Activated CD8-positive, alpha-beta memory T cell treated with anti-CD3 and anti-CD28 coated beads, Interleukin-2, amount 10 ng/mL, durations not matched to agents 7 days and 5 days (primary cell): ENCODE measurements at regions of chr16 and their contacts with region 1.

Region 1: DNA sequence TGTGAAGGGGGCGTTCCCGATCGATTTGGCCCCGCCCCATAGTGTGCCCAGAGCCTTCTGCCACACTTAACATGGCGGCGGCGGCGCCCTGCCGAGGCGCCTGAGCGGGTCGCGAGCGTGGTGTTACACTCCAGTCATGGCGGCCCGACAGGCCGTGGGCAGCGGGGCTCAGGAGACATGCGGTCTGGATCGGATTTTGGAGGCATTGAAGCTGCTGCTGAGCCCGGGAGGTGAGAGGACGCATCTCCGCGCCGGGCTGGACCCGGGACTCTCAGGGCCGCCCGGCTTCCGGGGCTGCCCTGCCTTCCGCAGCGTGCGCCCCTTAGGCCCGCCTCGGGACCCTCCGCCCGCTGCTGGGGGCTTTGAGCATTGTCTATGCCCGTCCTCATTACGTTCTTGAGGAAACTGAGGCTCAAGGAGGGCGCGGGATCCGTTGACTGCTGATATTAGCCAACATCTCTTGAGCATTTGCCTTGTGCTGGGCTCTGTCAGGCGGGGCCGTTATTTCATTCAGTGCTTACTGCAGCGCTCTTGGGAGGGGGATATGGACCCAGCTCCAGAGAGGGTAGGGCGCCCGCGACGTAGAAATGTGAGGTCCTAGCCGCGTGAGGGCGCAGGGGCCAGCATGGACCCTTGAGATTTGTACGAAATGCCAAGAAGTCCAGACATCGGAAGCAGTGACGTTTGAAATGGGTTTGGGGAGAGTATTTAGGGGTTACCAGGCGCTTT is at the start of gene TANGO6:
- DNase-seq: peak; percentile 93
- ATAC-seq: peak; percentile 94
- H3K4me3 Mint-ChIP-seq: peak within 1 kb of the TSS; percentile 89
- H3K27ac Mint-ChIP-seq: peak within 1 kb of the TSS; percentile 89
- H3K4me1 Mint-ChIP-seq: peaks cover 32% of the 10 kb centered on the region
- H3K27me3 Mint-ChIP-seq: no peaks in the 10 kb centered on the region
- total RNA-seq, gene TANGO6: 20.2 to 22.3 TPM

Region 2: GRCh38 chr16:68528686-68529379 is 314.8 kb before region 1 on chr16:
- CTCF ChIA-PET with region 1: interaction called, 10 read pairs
- DNase-seq: peak; percentile 91
- ATAC-seq: peak; percentile 82
- H3K4me3 Mint-ChIP-seq: peak overlapping the region; percentile 77
- H3K27ac Mint-ChIP-seq: no peak overlapping the region
- H3K4me1 Mint-ChIP-seq: peaks cover 22% of the 10 kb centered on the region
- H3K27me3 Mint-ChIP-seq: no peaks in the 10 kb centered on the region

Region 3: GRCh38 chr16:68590201-68590994 is 253.2 kb before region 1 on chr16:
- CTCF ChIA-PET with region 1: interaction called, 12 read pairs
- DNase-seq: peak; percentile 67
- ATAC-seq: peak; percentile 74
- H3K4me3 Mint-ChIP-seq: no peak overlapping the region
- H3K27ac Mint-ChIP-seq: no peak overlapping the region
- H3K4me1 Mint-ChIP-seq: peaks cover 2% of the 10 kb centered on the region
- H3K27me3 Mint-ChIP-seq: peaks cover 2% of the 10 kb centered on the region

Region 4: DNA sequence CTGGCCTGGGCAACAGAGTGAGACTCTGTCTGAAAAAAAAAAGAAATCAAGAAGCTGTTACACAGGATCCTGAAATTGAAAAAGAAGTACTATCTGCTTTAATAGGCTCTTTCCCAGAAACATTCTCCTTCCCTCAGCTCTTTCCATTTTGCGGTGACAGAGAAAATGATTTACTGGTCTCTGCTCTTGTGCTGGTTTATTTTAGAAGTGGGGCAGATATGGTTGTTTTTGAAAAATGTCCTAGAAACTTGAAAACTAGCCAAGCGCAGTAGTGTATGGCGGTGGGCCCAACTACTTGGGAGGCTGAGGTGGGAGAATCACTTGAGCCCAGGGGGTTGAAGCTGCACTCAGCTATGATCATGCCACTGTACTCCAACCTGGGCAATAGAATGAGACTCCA is 29.1 kb before region 1 on chr16:
- CTCF ChIA-PET with region 1: no interaction called
- DNase-seq: no peak
- ATAC-seq: no peak
- H3K4me3 Mint-ChIP-seq: no peak overlapping the region
- H3K27ac Mint-ChIP-seq: no peak overlapping the region
- H3K4me1 Mint-ChIP-seq: no peaks in the 10 kb centered on the region
- H3K27me3 Mint-ChIP-seq: no peaks in the 10 kb centered on the region

Region 5: GRCh38 chr16:68921654-68922053 is 78.0 kb after region 1 on chr16:
- CTCF ChIA-PET with region 1: no interaction called
- DNase-seq: no peak
- ATAC-seq: no peak
- H3K4me3 Mint-ChIP-seq: no peak overlapping the region
- H3K27ac Mint-ChIP-seq: no peak overlapping the region
- H3K4me1 Mint-ChIP-seq: no peaks in the 10 kb centered on the region
- H3K27me3 Mint-ChIP-seq: no peaks in the 10 kb centered on the region

Region 6: GRCh38 chr16:69105489-69106361 is 262.1 kb after region 1 on chr16 and contains the start of gene HAS3:
- CTCF ChIA-PET with region 1: interaction called, 14 read pairs
- DNase-seq: peak; percentile 59
- ATAC-seq: peak; percentile 76
- H3K4me3 Mint-ChIP-seq: peak within 1 kb of the TSS; percentile 76
- H3K27ac Mint-ChIP-seq: no peak within 1 kb of the TSS
- H3K4me1 Mint-ChIP-seq: peaks cover 15% of the 10 kb centered on the region
- H3K27me3 Mint-ChIP-seq: peaks cover 48% of the 10 kb centered on the region
- total RNA-seq, gene HAS3: 0.29 to 0.47 TPM